ENCODE measurements at regions of chr19 and their contacts with region 1.

Region 1: GRCh38 chr19:12789904-12790619 is 1.2 kb upstream of the JUNB start:
- DNase-seq: peak; percentile 90 to 93 (median 92)
- H3K4me3 ChIP-seq: peak overlapping the region; percentile 85 to 100
- H3K4me3 Mint-ChIP-seq: peak overlapping the region; percentile 92 to 98 (median 95)
- H3K27ac ChIP-seq: peak overlapping the region; percentile 100
- H3K27ac Mint-ChIP-seq: peak overlapping the region in 6 of 7 donors; percentile 99 to 100 (median 100)
- H3K4me1 ChIP-seq: peaks cover 55% of the 10 kb centered on the region
- H3K4me1 Mint-ChIP-seq: peaks cover 20 to 47% (median 28%) of the 10 kb centered on the region in 4 donors
- H3K27me3 ChIP-seq: no peaks in the 10 kb centered on the region
- H3K27me3 Mint-ChIP-seq: no peaks in the 10 kb centered on the region

Region 2: GRCh38 chr19:11856596-11857250 is 933.3 kb before region 1 on chr19:
- CTCF ChIA-PET with region 1: no interaction called
- POLR2A ChIA-PET with region 1: no interaction called
- intact Hi-C with region 1: no loop called
- DNase-seq: no peak
- H3K4me3 ChIP-seq: no peak overlapping the region
- H3K4me3 Mint-ChIP-seq: no peak overlapping the region
- H3K27ac ChIP-seq: no peak overlapping the region
- H3K27ac Mint-ChIP-seq: no peak overlapping the region
- H3K4me1 ChIP-seq: no peaks in the 10 kb centered on the region
- H3K4me1 Mint-ChIP-seq: no peaks in the 10 kb centered on the region
- H3K27me3 ChIP-seq: no peaks in the 10 kb centered on the region
- H3K27me3 Mint-ChIP-seq: no peaks in the 10 kb centered on the region

Region 3: DNA sequence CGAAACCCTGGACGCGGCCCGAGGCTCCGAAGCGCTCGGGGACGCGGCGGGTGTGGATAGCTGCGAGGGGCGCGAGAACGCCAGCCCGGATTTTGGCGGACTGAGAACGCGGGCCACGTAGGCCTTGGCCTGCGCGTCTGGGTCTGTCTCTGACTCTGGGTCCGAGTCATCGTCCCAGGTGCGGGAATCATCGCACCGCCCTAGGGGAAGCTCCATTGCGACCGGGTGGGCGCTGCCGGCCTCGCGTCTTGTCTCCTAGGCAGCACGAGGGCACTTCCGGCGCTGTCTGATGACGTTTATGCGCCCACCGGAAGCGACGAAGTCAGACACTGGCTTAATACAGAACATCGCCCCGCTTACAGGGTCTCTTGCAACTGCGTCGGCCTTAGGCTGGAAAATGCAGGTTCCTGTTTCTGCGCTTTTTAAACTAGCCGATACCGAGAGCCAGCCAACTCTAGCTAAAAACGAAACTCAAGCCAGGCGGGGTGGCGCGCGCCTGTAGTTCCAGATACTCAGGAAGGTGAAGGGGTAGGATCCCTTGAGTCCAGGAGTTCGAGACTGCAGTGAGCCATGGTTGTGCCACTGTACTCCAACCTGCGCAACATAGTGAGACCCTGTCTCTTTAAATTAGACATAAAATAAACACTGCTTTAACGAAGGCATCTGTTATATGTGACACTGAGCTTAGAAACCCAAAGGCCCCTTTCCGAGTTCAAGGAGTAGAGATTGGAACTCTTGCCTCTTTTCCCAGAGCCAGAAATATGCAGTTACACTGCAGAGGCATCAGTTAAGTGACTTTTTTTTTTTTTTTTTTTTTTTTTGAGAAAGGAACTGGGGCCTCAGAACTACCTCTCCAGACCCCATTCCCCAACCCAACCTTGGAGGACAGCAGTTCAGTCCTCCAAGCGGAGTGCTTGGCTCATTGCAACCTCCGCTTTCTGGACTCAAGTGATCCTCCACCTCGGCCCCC is 93.4 kb before region 1 on chr19 and contains the start of gene FBXW9:
- CTCF ChIA-PET with region 1: no interaction called
- POLR2A ChIA-PET with region 1: interaction called, 12 read pairs
- intact Hi-C with region 1: no loop called
- DNase-seq: peak; percentile 92 to 96 (median 93)
- H3K4me3 ChIP-seq: peak within 1 kb of the TSS; percentile 7 to 56
- H3K4me3 Mint-ChIP-seq: peak within 1 kb of the TSS; percentile 91 to 95 (median 94)
- H3K27ac ChIP-seq: peak within 1 kb of the TSS; percentile 76
- H3K27ac Mint-ChIP-seq: peak within 1 kb of the TSS; percentile 96 to 98 (median 97)
- H3K4me1 ChIP-seq: peaks cover 17% of the 10 kb centered on the region
- H3K4me1 Mint-ChIP-seq: peaks cover 4 to 17% (median 10%) of the 10 kb centered on the region in 4 donors
- H3K27me3 ChIP-seq: no peaks in the 10 kb centered on the region
- H3K27me3 Mint-ChIP-seq: no peaks in the 10 kb centered on the region
- total RNA-seq, gene FBXW9: 4.5 to 4.9 TPM

Region 4: GRCh38 chr19:12736995-12737834 is 52.8 kb before region 1 on chr19 and contains the start of gene GET3:
- CTCF ChIA-PET with region 1: interaction called, 3 read pairs
- POLR2A ChIA-PET with region 1: interaction called, 77 read pairs
- intact Hi-C with region 1: no loop called
- DNase-seq: peak; percentile 87 to 91 (median 89)
- H3K4me3 ChIP-seq: peak within 1 kb of the TSS; percentile 77 to 80
- H3K4me3 Mint-ChIP-seq: peak within 1 kb of the TSS; percentile 98 to 100 (median 99)
- H3K27ac ChIP-seq: peak within 1 kb of the TSS; percentile 87
- H3K27ac Mint-ChIP-seq: peak within 1 kb of the TSS; percentile 94 to 98 (median 97)
- H3K4me1 ChIP-seq: peaks cover 40% of the 10 kb centered on the region
- H3K4me1 Mint-ChIP-seq: peaks cover 25 to 50% (median 36%) of the 10 kb centered on the region in 4 donors
- H3K27me3 ChIP-seq: no peaks in the 10 kb centered on the region
- H3K27me3 Mint-ChIP-seq: peaks cover 0 to 2% of the 10 kb centered on the region in 2 donors
- total RNA-seq, gene GET3: 30.8 to 34.5 TPM

Region 5: GRCh38 chr19:12766051-12766521 is 24.0 kb before region 1 on chr19:
- CTCF ChIA-PET with region 1: interaction called, 906 read pairs
- POLR2A ChIA-PET with region 1: interaction called, 1,162 read pairs
- intact Hi-C with region 1: no loop called
- DNase-seq: peak; percentile 63 to 83 (median 69)
- H3K4me3 ChIP-seq: no peak overlapping the region
- H3K4me3 Mint-ChIP-seq: peak overlapping the region in 1 of 8 donors; percentile 48
- H3K27ac ChIP-seq: no peak overlapping the region
- H3K27ac Mint-ChIP-seq: peak overlapping the region in 1 of 7 donors; percentile 42
- H3K4me1 ChIP-seq: no peaks in the 10 kb centered on the region
- H3K4me1 Mint-ChIP-seq: peaks cover 2 to 14% (median 6%) of the 10 kb centered on the region in 4 donors
- H3K27me3 ChIP-seq: no peaks in the 10 kb centered on the region
- H3K27me3 Mint-ChIP-seq: no peaks in the 10 kb centered on the region

Region 6: DNA sequence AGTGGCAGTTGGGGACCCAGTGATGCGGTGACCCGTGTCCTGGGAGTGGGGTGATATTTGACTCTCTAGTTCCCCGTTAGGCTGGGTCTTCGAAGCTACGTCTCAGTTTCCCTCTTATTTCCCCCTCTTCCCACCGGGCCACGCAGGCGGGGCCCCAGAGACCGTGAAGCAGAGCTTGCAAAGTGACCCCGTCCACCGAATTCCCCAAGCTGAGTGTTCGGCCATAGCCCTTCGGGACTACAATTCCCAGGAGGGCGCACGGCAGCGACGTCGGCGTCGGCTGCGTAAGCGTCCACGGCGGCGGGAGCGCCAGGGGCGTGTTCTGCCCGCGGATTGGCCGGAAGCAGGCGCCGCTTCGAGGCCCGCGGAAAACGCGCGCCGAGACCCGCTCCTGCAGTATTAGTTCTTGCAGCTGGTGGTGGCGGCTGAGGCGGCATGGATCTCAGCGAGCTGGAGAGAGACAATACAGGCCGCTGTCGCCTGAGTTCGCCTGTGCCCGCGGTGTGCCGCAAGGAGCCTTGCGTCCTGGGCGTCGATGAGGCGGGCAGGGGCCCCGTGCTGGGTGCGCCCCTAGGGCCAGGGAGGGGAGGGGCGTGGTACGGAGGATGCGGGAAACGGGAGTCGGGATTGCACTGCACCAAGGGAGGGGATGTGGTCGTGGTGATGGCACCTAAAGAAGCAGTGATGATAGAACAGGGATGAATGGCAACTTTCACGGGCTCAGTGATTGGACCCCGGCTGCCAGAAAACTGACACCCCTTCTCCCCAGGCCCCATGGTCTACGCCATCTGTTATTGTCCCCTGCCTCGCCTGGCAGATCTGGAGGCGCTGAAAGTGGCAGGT is 16.4 kb after region 1 on chr19 and contains the start of gene RNASEH2A:
- CTCF ChIA-PET with region 1: interaction called, 6 read pairs
- POLR2A ChIA-PET with region 1: interaction called, 68 read pairs
- intact Hi-C with region 1: no loop called
- DNase-seq: peak; percentile 82 to 86 (median 84)
- H3K4me3 ChIP-seq: peak within 1 kb of the TSS; percentile 53 to 84
- H3K4me3 Mint-ChIP-seq: peak within 1 kb of the TSS; percentile 75 to 98 (median 90)
- H3K27ac ChIP-seq: peak within 1 kb of the TSS; percentile 63
- H3K27ac Mint-ChIP-seq: peak within 1 kb of the TSS; percentile 75 to 94 (median 89)
- H3K4me1 ChIP-seq: peaks cover 24% of the 10 kb centered on the region
- H3K4me1 Mint-ChIP-seq: peaks cover 15 to 33% (median 22%) of the 10 kb centered on the region in 4 donors
- H3K27me3 ChIP-seq: no peaks in the 10 kb centered on the region
- H3K27me3 Mint-ChIP-seq: no peaks in the 10 kb centered on the region
- total RNA-seq, gene RNASEH2A: 10.5 to 12.6 TPM

Region 7: GRCh38 chr19:13846557-13847406 is 1056.7 kb after region 1 on chr19:
- CTCF ChIA-PET with region 1: no interaction called
- POLR2A ChIA-PET with region 1: no interaction called
- intact Hi-C with region 1: loop called (anchors 5 kb)
- DNase-seq: peak; percentile 99
- H3K4me3 ChIP-seq: peak overlapping the region; percentile 50 to 79
- H3K4me3 Mint-ChIP-seq: peak overlapping the region; percentile 83 to 98 (median 90)
- H3K27ac ChIP-seq: peak overlapping the region; percentile 99
- H3K27ac Mint-ChIP-seq: peak overlapping the region; percentile 99 to 100 (median 100)
- H3K4me1 ChIP-seq: peaks cover 69% of the 10 kb centered on the region
- H3K4me1 Mint-ChIP-seq: peaks cover 33 to 77% (median 50%) of the 10 kb centered on the region in 4 donors
- H3K27me3 ChIP-seq: no peaks in the 10 kb centered on the region
- H3K27me3 Mint-ChIP-seq: peaks cover 0 to 4% of the 10 kb centered on the region in 2 donors